Vagina (tissue), 2 donors: ENCODE measurements at regions of chr5 and their contacts with region 1.

Region 1: DNA sequence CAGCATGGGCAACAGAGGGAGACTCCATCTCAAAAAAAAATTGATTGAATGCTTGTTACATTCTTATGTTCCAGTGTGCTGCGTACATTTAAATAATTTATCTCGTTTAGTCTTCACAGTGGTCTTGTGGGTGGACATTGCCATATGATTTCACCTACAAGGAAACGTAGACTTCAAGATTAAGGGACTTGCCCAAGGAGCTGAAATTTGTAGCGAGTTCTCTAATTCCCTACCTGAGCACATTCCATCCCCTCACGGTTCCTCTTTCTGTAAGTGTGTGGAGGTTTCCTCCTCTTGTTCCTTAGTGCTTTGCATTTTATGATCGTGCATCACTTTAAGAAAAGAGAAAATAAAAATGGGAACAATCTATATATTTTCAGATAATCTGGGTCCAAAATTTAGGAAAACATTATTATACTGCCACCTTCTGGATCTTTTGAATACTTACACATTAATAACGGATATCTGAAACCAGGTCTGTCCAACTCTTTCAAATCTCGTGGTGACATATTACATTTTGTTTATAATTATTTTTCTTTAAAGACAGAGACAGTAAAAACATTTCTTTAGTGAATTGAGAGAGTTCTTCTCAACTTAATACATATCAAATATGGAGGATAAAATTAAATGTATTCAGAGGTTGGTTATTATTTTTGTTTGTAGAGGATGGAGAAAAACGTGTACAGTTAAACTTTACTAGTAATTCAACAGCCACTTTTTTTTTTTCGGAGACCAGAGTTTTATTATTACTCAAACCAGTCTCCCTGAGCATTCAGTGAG is 29.9 kb upstream of the C7 start:
- DNase-seq: no peak
- H3K4me3 ChIP-seq: no peak overlapping the region
- H3K27ac ChIP-seq: no peak overlapping the region
- H3K4me1 ChIP-seq: no peaks in the 10 kb centered on the region
- H3K27me3 ChIP-seq: no peaks in the 10 kb centered on the region
- CTCF ChIP-seq: peak; percentile 26 to 62 (median 61)
- POLR2A ChIP-seq: no peak

Region 2: GRCh38 chr5:39580702-39581453 is 1298.5 kb before region 1 on chr5:
- intact Hi-C with region 1: loop called (anchors 10 kb)
- DNase-seq: no peak
- H3K4me3 ChIP-seq: no peak overlapping the region
- H3K27ac ChIP-seq: no peak overlapping the region
- H3K4me1 ChIP-seq: peaks cover 8% of the 10 kb centered on the region
- H3K27me3 ChIP-seq: no peaks in the 10 kb centered on the region
- CTCF ChIP-seq: no peak
- POLR2A ChIP-seq: no peak